ENCODE measurements at regions of chr9 and their contacts with region 1.

Region 1: DNA sequence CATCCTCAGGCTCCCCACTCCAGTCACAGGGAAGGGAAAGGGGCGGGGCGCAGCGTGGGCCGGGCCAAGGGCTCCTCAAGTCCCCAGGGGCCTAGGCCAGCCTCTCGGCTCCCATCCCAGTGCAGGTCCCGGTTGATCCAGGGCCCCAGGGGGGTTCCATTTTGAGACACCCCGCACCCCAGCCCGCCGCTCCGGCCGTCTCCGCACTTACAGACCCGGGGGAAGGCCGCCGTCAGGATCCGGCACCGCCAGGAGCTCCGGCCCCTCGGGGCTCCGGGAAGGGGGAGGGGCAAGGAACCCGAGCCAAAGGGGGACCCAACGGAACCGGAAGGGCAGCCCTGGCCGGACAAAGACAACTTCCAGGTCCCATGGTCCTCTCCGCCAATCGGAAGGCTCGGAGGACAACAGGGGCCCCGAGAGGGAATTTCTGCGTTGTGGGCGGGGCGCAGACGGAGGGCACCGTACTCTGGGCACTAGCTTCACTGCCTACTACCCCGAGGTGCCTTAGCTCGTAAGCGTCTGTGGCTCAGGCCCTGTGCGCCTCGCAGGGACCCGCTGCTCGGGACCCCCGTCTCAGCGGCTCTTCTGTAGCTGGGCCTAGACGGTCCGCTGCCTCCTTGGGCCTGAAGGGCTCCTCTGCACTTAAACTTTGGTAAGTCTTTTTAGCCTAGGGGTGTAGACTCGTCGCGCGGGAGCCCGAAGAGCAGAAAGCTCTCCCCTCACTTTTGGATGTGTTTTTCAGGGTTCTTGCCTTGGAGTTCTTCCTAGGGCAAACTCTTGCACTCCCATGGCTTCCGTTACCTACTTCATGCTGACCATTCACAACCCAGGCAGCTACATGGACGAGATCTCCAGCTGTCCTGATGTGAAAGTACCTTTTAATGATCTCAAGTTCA is at the start of gene ZBTB26:
- DNase-seq: peak; percentile 51
- H3K4me3 ChIP-seq: peak within 1 kb of the TSS; percentile 76
- H3K27me3 ChIP-seq: no peaks in the 10 kb centered on the region
- CTCF ChIP-seq: no peak
- polyA plus RNA-seq, gene ZBTB26: 4.4 and 8.0 TPM in 2 replicates

Region 2: GRCh38 chr9:122941560-122942211 is 10.2 kb after region 1 on chr9:
- CTCF ChIA-PET with region 1: no interaction called
- POLR2A ChIA-PET with region 1: no interaction called
- DNase-seq: no peak
- H3K4me3 ChIP-seq: peak overlapping the region; percentile 94
- H3K27me3 ChIP-seq: no peaks in the 10 kb centered on the region
- CTCF ChIP-seq: no peak

Region 3: DNA sequence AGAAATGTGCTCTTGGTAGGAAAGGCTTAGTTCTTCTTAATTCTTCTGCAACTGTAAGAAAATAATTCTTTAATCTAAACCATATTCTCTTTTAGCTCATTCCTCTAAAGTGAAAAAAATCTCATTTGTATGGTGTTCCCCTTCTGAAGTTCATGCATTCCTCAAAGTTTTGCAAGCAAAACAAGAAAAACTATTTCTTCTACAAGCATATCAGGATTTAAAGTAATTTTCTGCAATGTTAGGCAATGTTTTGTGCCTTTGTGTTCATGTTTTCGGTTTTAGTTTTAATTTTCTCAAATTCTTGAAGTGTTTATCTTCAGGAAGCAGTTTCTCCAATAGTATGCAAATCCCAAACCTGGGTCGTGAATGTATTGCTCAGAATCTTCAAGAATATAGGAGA is 89.3 kb after region 1 on chr9:
- CTCF ChIA-PET with region 1: no interaction called
- POLR2A ChIA-PET with region 1: interaction called, 10 read pairs
- DNase-seq: no peak
- H3K4me3 ChIP-seq: no peak overlapping the region
- H3K27me3 ChIP-seq: no peaks in the 10 kb centered on the region
- CTCF ChIP-seq: no peak

Region 4: GRCh38 chr9:123033864-123034601 is 102.6 kb after region 1 on chr9:
- CTCF ChIA-PET with region 1: no interaction called
- POLR2A ChIA-PET with region 1: no interaction called
- DNase-seq: no peak
- H3K4me3 ChIP-seq: no peak overlapping the region
- H3K27me3 ChIP-seq: no peaks in the 10 kb centered on the region
- CTCF ChIP-seq: no peak

Region 5: DNA sequence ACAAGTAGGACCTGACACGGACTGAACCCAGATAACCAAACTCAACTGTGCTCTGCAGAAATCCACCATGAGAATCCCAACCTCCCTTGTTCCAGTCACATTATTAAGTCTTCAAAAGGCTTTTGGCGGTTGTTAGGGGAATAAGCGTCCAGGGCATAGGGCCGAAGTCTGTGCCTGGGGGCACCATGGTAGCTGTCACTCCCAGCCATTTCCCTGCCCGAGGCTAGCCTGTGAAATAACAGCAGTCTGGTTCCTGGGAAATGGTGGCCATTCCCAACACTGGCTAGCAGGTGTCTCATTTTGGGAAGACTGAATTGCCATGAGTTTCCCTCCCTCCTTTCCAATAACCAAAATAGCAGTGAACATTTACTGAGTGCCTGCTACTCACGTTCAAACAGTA is 546.7 kb after region 1 on chr9:
- CTCF ChIA-PET with region 1: no interaction called
- POLR2A ChIA-PET with region 1: interaction called, 16 read pairs
- DNase-seq: no peak
- H3K4me3 ChIP-seq: no peak overlapping the region
- H3K27me3 ChIP-seq: no peaks in the 10 kb centered on the region
- CTCF ChIP-seq: no peak

Measured in BJ (cell line).